ENCODE measurements at regions of chr4 and their contacts with region 1.

Region 1: GRCh38 chr4:21790438-21791029 is 158.0 kb downstream of the KCNIP4 start:
- DNase-seq: peak; percentile 36
- H3K4me3 ChIP-seq: no peak overlapping the region
- H3K27ac ChIP-seq: no peak overlapping the region
- H3K4me1 ChIP-seq: no peaks in the 10 kb centered on the region
- H3K27me3 ChIP-seq: no peaks in the 10 kb centered on the region
- CTCF ChIP-seq: peak; percentile 67

Region 2: GRCh38 chr4:19806865-19807264 is 1983.7 kb before region 1 on chr4:
- CTCF ChIA-PET with region 1: interaction called, 11 read pairs
- POLR2A ChIA-PET with region 1: no interaction called
- intact Hi-C with region 1: no loop called
- DNase-seq: no peak
- H3K4me3 ChIP-seq: no peak overlapping the region
- H3K27ac ChIP-seq: no peak overlapping the region
- H3K4me1 ChIP-seq: no peaks in the 10 kb centered on the region
- H3K27me3 ChIP-seq: no peaks in the 10 kb centered on the region
- CTCF ChIP-seq: no peak

Region 3: DNA sequence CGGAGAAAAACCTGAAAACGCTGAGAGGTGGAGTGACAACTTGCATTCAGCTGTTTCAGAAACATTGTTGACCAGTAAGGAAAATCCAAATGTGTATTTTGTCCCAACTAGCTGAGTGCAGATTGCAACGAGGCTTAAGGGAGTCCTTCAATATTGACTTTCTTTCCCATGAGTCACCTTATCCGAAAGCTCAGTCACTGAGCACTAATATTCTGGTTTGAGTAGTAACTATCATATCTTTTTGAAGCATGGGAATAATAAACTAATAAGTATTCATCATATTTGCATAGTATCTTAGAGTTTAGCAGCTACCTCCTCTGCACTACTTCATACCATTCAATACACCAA is 486.0 kb before region 1 on chr4:
- CTCF ChIA-PET with region 1: no interaction called
- POLR2A ChIA-PET with region 1: no interaction called
- intact Hi-C with region 1: no loop called
- DNase-seq: no peak
- H3K4me3 ChIP-seq: no peak overlapping the region
- H3K27ac ChIP-seq: no peak overlapping the region
- H3K4me1 ChIP-seq: no peaks in the 10 kb centered on the region
- H3K27me3 ChIP-seq: peaks cover 38% of the 10 kb centered on the region
- CTCF ChIP-seq: no peak

Region 4: DNA sequence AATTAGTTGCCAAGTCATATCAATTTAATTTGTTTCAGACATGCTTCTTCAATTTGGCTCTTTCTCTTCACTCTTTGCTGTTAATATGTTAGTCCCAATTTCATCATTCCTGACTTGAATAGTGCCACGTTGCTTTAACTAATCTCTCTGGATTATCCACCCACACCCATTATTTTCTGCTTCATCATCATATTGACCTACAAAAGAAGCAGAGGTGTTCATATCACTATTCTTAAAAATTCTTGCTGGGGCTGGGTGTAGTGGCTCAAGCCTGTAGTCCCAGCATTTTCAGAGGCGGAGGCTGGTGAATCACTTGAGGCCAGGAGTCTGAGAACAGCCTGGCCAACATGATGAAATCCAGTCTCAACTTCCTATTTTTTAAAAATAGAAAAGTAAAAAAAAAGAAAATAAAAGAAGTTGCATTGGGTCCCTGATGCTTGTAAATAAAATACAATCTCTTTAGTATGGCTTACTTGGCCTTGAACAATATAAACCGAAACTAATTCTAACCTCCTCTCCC is 223.7 kb after region 1 on chr4:
- CTCF ChIA-PET with region 1: no interaction called
- POLR2A ChIA-PET with region 1: no interaction called
- intact Hi-C with region 1: no loop called
- DNase-seq: no peak
- H3K4me3 ChIP-seq: no peak overlapping the region
- H3K27ac ChIP-seq: no peak overlapping the region
- H3K4me1 ChIP-seq: no peaks in the 10 kb centered on the region
- H3K27me3 ChIP-seq: no peaks in the 10 kb centered on the region
- CTCF ChIP-seq: no peak

Region 5: DNA sequence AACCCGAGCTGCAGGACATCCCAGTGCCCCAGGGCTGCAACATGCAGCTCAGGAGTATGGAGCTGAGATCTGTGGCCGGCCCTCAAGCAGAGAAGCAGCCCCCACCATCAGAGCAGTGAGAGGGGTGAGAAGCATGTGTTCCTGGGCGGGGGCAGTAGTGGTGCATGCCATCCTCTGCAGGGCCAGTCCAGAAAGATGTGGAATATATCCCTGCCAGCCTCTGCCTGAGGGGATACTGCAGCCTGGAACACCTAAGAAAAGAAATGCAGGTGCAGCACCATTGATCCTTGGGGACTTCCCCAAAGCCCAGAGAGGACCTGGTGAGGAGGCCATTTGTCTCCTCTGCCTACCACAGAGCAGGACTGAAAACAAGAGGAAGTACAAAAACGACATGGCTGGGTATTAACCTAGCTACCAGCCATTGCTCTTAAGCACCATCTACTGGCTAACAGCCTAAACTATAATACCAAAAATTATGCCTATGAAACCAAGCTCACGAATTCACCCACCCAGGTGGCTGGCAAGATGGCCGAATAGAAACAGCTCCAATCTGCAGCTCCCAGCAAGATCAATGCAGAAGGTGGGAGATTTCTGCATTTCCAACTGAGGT is 566.6 kb after region 1 on chr4:
- CTCF ChIA-PET with region 1: interaction called, 5 read pairs
- POLR2A ChIA-PET with region 1: no interaction called
- intact Hi-C with region 1: loop called (anchors 1 kb)
- DNase-seq: peak; percentile 32
- H3K4me3 ChIP-seq: no peak overlapping the region
- H3K27ac ChIP-seq: no peak overlapping the region
- H3K4me1 ChIP-seq: no peaks in the 10 kb centered on the region
- H3K27me3 ChIP-seq: no peaks in the 10 kb centered on the region
- CTCF ChIP-seq: peak; percentile 45

Region 6: GRCh38 chr4:22389240-22389870 is 598.8 kb after region 1 on chr4:
- CTCF ChIA-PET with region 1: interaction called, 37 read pairs
- POLR2A ChIA-PET with region 1: no interaction called
- intact Hi-C with region 1: loop called (anchors 1 kb)
- DNase-seq: peak; percentile 65
- H3K4me3 ChIP-seq: no peak overlapping the region
- H3K27ac ChIP-seq: no peak overlapping the region
- H3K4me1 ChIP-seq: no peaks in the 10 kb centered on the region
- H3K27me3 ChIP-seq: no peaks in the 10 kb centered on the region
- CTCF ChIP-seq: peak; percentile 87

Region 7: DNA sequence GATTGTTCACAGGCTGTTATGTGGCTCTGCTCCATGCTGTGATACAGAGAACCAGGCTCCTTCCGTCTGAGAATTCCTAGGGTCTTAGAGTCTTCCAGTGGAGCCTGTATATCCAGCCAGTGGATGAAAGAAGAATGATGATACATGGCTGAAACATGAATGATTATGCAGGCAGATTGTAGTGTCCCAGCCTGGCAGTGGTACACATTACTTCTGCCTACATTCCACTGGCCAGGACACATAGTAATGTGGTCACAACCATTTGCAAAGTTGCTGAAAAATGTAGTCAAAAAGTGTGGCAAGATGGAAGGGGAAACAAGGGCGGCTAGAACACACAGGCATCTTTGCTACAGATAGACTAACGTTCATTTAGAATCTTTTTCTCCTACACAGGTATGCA is 897.7 kb after region 1 on chr4:
- CTCF ChIA-PET with region 1: no interaction called
- POLR2A ChIA-PET with region 1: no interaction called
- intact Hi-C with region 1: loop called (anchors 2 kb)
- DNase-seq: no peak
- H3K4me3 ChIP-seq: no peak overlapping the region
- H3K27ac ChIP-seq: no peak overlapping the region
- H3K4me1 ChIP-seq: no peaks in the 10 kb centered on the region
- H3K27me3 ChIP-seq: peaks cover 37% of the 10 kb centered on the region
- CTCF ChIP-seq: no peak